ENCODE measurements at regions of chr11 and their contacts with region 1.

Region 1: GRCh38 chr11:34357701-34358257 is at the start of gene ABTB2:
- H3K4me3 ChIP-seq: peak within 1 kb of the TSS; percentile 69
- H3K27ac ChIP-seq: peak within 1 kb of the TSS; percentile 85
- H3K4me1 ChIP-seq: peaks cover 3% of the 10 kb centered on the region; the same call in 1 of the 2 replicates
- CTCF ChIP-seq: no peak

Region 2: GRCh38 chr11:34105079-34105956 is 252.5 kb before region 1 on chr11 and contains the start of gene NAT10:
- CTCF ChIA-PET with region 1: interaction called, 3 read pairs
- POLR2A ChIA-PET with region 1: interaction called, 10 read pairs
- H3K4me3 ChIP-seq: peak within 1 kb of the TSS; percentile 79
- H3K27ac ChIP-seq: peak within 1 kb of the TSS; percentile 80
- H3K4me1 ChIP-seq: no peaks in the 10 kb centered on the region
- CTCF ChIP-seq: peak; percentile 85

Region 3: DNA sequence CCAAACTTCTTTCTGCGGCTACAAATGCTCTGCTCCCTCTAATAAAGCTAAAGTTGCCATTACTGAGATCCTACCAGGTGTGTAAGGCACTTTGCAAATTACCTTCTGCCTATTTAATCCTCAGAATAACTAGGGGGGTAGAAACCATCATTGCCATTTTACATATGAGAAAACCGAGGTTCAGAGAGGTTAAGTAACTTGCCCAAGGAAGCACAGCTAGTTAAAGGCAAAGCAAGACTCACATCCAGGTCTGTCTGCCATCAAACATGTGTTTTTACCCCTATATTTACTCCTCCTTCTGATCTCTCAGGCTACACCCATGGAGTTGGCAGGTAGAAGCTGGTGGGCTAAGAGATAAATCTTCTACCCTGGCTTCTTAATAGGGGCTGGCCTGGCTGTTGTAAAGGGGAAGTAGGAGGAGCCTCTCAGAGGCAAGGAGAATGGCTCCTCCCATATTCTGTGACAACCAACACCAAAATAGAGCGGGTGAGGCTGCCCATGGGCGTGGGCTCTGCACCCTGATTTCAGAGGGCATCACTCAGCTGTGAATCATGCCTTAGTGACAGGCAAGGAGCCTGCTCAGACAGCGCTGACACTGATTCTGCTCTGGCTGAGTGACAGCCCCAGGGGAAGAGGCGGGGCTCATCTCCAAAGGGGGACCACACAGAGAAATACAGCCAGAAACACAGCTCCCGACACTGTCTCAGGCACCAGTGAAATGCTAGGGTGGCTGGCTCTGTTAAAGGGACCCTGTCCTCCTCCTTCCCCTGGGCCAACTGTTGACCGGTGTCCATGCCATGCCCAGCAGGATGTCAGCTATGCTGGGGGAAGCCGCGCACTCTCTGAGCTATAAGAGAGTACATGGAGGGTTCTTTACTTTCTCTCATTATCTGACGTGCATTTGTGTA is 106.8 kb before region 1 on chr11:
- CTCF ChIA-PET with region 1: interaction called, 3 read pairs
- POLR2A ChIA-PET with region 1: interaction called, 11 read pairs
- H3K4me3 ChIP-seq: peak overlapping the region; percentile 6; the same call in 1 of the 2 replicates
- H3K27ac ChIP-seq: no peak overlapping the region
- H3K4me1 ChIP-seq: no peaks in the 10 kb centered on the region; the same call in 1 of the 2 replicates
- CTCF ChIP-seq: no peak

Region 4: DNA sequence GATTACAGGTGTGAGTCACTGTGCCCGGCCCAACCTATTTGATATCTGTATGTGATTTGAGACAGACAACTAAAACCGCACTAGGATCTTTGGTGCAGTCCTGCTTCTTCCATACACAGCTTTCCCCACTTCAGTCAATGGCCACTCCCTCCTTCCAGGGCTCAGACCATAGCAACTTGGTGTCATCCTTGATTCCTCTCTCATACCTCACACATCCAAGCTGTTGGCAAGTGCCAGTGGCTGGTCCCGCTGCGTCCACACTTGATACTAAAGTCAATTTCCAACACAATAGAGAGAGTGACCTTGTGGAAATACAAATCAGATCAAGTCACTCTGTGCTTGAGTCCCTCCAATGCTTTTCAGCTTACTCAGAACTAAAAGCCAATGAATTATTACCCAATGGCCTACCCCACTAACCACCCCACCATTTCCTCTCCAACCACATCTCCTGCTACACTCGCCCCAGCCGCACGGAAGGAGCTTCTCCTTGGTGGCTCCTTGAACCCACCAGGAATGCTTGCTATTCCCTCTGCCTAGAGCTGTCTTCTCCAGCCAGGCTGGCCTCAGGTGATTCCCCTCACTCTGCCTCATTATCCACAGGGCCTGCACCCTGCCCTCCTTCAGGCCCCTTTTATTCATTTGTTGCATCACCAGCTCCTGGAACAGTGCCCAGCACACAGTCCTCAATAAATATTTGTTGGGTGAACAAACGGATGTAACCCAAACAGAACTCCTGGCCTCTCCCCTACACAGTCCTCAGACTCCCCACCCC is 12.8 kb before region 1 on chr11:
- CTCF ChIA-PET with region 1: interaction called, 6 read pairs
- POLR2A ChIA-PET with region 1: interaction called, 61 read pairs
- H3K4me3 ChIP-seq: no peak overlapping the region
- H3K27ac ChIP-seq: no peak overlapping the region
- H3K4me1 ChIP-seq: peaks cover 13% of the 10 kb centered on the region
- CTCF ChIP-seq: no peak